Upper lobe of right lung (tissue), 1 donor: ENCODE measurements at regions of chr5 and their contacts with region 1.

Region 1: GRCh38 chr5:113070901-113071300 is 94.3 kb downstream of the DCP2 start:
- DNase-seq: no peak
- ATAC-seq: no peak
- H3K4me3 ChIP-seq: no peak overlapping the region
- H3K27ac ChIP-seq: no peak overlapping the region
- H3K4me1 ChIP-seq: no peaks in the 10 kb centered on the region
- H3K27me3 ChIP-seq: no peaks in the 10 kb centered on the region
- CTCF ChIP-seq: no peak

Region 2: DNA sequence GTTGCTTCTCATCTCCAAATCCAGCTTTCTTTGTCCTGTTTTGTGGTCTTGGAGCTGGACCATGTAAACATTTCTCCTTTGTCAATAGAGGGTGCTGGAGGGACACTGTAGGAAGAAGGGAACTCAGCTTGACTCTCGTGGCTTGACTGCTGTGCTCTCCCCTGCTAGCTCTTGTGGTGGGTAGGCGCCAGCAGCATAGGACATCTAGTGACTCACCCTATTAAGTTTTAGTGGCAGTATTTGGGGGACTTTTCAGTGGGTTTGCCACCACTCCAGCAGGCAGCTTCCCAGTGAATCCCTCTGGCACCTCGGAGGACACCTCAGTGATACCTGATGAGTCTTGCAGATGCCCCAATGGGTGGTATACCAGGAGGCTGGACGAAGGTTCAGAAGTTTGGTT is 266.1 kb after region 1 on chr5:
- intact Hi-C with region 1: loop called (anchors 5 kb)
- DNase-seq: no peak
- ATAC-seq: peak; percentile 72
- H3K4me3 ChIP-seq: no peak overlapping the region
- H3K27ac ChIP-seq: no peak overlapping the region
- H3K4me1 ChIP-seq: no peaks in the 10 kb centered on the region
- H3K27me3 ChIP-seq: no peaks in the 10 kb centered on the region
- CTCF ChIP-seq: peak; percentile 35